Vagina (tissue), 2 donors: ENCODE measurements at regions of chr12 and their contacts with region 1.

Region 1: DNA sequence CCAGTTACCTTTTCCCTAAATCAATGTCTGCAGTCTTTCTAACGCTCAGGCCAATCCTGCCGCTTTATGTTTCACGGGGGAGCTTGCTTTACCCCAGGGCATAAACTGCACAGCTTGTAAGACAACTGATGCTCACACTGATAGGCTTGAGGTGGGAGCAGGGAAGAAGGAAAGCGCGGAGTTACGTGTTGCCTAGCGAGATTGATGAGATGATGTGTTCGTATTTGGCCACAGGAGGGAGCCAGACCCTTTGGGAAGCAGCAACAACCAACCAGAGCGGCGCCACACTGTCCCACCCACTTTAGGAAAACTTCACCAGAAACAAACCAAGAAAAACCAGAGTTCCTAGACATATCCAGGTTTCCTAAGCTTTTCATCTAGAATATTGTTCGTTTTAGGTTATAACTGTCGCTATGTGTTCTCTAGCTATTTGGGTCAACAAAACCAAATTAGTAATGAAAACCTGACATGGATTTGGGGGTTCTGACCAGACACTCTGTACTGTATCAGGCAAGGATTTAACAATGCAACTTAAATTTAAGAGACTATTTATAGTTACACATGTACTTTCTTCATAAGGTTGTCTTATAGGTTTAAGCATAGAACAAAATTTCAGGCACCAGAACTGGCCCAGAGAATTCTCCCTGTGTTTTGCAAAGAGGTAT is 2.4 kb downstream of the IL26 start:
- DNase-seq: no peak
- H3K4me3 ChIP-seq: no peak overlapping the region
- H3K27ac ChIP-seq: no peak overlapping the region
- H3K4me1 ChIP-seq: no peaks in the 10 kb centered on the region
- H3K27me3 ChIP-seq: no peaks in the 10 kb centered on the region
- CTCF ChIP-seq: peak; percentile 33 to 87 (median 72)
- POLR2A ChIP-seq: no peak

Region 2: GRCh38 chr12:68267892-68268396 is 44.7 kb after region 1 on chr12:
- intact Hi-C with region 1: no loop called
- DNase-seq: no peak
- H3K4me3 ChIP-seq: no peak overlapping the region
- H3K27ac ChIP-seq: no peak overlapping the region
- H3K4me1 ChIP-seq: no peaks in the 10 kb centered on the region
- H3K27me3 ChIP-seq: no peaks in the 10 kb centered on the region
- CTCF ChIP-seq: no peak
- POLR2A ChIP-seq: no peak

Region 3: DNA sequence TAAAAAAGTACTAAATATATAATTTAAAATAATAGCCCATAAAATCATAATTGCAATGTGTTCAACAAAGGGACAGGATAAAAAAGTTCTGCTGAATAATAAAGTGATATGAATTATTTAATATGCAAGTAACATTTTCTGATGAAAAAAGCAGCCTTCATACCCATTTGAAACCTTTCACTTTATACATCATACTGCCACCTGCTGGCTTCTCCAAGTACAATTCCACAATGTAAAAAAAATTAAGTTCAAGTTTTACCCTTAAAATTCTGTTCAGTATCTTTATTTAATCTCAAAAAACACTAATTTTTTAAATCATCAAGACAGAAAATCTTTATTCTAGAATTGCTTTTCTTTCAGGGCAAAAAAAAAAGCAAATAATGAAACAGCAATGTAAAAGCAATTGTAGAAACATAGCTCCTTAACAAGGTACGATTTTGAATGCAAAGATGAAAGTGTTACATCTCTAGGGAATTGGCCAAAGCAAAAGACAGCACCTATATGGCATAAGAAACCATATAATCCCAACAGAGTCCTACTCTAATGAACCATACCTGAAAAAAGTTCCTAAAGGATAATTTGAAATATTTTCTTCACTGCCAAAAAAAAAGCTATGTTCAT is 93.9 kb after region 1 on chr12:
- intact Hi-C with region 1: loop called (anchors 10 kb)
- DNase-seq: no peak
- H3K4me3 ChIP-seq: no peak overlapping the region
- H3K27ac ChIP-seq: no peak overlapping the region
- H3K4me1 ChIP-seq: no peaks in the 10 kb centered on the region
- H3K27me3 ChIP-seq: no peaks in the 10 kb centered on the region
- CTCF ChIP-seq: peak in 1 of 3 experiments; percentile 63
- POLR2A ChIP-seq: no peak

Region 4: DNA sequence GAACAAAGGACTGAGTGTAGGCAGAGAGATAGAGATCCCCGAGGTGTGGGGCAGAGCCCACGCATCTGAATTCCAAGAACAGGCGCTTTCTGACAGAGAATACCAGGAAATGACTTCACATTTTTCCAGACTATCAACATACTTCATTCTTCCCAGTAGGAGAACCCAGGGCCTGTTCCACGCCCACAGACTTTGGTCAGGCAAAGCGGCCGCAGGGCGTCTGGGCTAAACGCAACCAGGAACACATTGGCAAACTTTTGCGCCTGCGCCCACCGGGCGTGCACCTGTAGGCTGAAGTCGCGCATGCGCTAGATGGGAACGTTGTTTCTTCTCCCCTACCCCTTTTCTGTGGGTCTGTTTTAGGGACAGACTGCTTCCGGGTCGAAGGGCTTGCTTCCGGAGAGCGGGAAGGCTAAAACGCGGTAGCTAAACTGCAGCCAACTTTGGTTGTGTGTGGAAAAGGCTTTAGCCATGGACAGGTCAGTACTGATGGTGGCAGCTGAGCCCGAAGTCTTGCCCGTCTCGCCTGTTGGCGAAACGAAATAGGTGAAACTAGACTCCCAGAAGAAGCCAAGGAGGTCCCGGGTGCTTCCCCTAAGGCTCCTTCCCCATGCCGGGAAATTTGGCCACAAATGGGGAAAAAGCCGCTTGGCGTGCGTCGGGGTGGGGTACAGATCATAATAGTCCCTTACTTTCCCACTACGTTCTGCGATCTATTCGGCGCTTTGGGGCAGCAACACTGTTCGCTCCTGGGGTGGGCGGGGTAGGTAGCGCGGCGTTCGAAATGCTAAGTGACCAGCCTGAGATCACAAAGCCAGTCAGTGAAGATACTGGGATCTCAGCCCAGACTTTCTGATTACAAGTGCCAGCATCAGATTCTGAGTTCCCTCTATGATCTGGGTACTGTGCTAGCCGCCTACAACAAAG is 463.6 kb after region 1 on chr12 and contains the start of gene NUP107:
- intact Hi-C with region 1: no loop called
- DNase-seq: peak in 1 of 2 donors; percentile 98
- H3K4me3 ChIP-seq: peak within 1 kb of the TSS; percentile 82 to 84
- H3K27ac ChIP-seq: peak within 1 kb of the TSS; percentile 60
- H3K4me1 ChIP-seq: peaks cover 21% of the 10 kb centered on the region
- H3K27me3 ChIP-seq: no peaks in the 10 kb centered on the region
- CTCF ChIP-seq: peak in 1 of 3 experiments; percentile 31
- POLR2A ChIP-seq: no peak
- total RNA-seq, gene NUP107: 42.5 TPM